ENCODE measurements at regions of chr17 and their contacts with region 1.

Region 1: GRCh38 chr17:17859909-17860765 is 23.4 kb upstream of the SREBF1 start:
- DNase-seq: peak; percentile 67 to 83 (median 78)
- H3K4me3 ChIP-seq: no peak overlapping the region
- H3K27ac ChIP-seq: no peak overlapping the region
- H3K4me1 ChIP-seq: peaks cover 2 to 12% (median 9%) of the 10 kb centered on the region in 3 donors
- H3K27me3 ChIP-seq: no peaks in the 10 kb centered on the region
- CTCF ChIP-seq: peak; percentile 98

Region 2: DNA sequence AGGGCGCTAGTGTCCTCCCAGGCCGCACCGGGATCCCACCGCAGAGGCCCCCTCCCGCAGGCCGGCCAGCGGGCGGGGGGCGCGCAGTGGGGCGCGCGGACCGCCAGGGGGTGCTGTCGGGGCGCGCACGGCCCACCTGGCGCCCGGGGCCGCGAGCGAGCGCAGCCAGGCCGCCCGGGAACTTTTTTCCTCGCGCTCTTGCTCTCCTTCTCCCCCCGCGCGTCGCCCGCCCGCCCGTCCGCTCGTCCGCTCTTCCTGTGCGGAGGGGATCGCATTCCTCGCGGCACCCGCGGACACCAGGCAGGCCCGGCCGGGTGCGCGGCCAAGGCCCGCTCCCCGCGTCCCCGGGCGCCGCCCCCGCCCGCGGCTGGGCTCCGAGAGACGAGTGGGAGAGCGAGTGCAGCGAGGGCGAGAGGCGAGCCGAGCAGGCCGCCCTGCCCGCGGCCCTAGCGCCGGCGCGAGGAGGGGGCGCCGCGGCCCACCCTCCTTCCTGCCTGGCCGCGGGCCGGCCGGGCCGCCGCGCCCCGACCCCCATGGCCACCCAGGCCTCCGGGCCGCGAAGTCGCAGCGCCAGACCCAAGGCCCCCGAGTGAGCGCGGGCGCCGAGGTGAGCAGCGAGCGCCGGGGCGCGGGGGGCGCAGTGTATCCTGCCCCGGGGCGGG is 178.8 kb before region 1 on chr17 and contains the start of gene RAI1:
- intact Hi-C with region 1: loop called (anchors 5 kb)
- DNase-seq: peak; percentile 87 to 95 (median 91)
- H3K4me3 ChIP-seq: peak within 1 kb of the TSS; percentile 20 to 71 (median 37)
- H3K27ac ChIP-seq: peak within 1 kb of the TSS; percentile 93
- H3K4me1 ChIP-seq: peaks cover 0 to 21% (median 18%) of the 10 kb centered on the region in 3 donors
- H3K27me3 ChIP-seq: no peaks in the 10 kb centered on the region
- CTCF ChIP-seq: peak; percentile 84
- total RNA-seq, gene RAI1: 50.5 TPM

Region 3: GRCh38 chr17:17712268-17712924 is 147.7 kb before region 1 on chr17:
- intact Hi-C with region 1: no loop called
- DNase-seq: no peak
- H3K4me3 ChIP-seq: no peak overlapping the region
- H3K27ac ChIP-seq: peak overlapping the region; percentile 81 to 88
- H3K4me1 ChIP-seq: peaks cover 0 to 31% (median 17%) of the 10 kb centered on the region in 3 donors
- H3K27me3 ChIP-seq: no peaks in the 10 kb centered on the region
- CTCF ChIP-seq: no peak

Region 4: GRCh38 chr17:17812211-17813057 is 47.7 kb before region 1 on chr17:
- intact Hi-C with region 1: loop called (anchors 5 kb)
- DNase-seq: peak; percentile 78 to 92 (median 85)
- H3K4me3 ChIP-seq: no peak overlapping the region
- H3K27ac ChIP-seq: peak overlapping the region in 1 of 2 donors; percentile 14
- H3K4me1 ChIP-seq: peaks cover 2 to 12% (median 6%) of the 10 kb centered on the region in 3 donors
- H3K27me3 ChIP-seq: no peaks in the 10 kb centered on the region
- CTCF ChIP-seq: peak; percentile 94

Region 5: GRCh38 chr17:17950806-17951205 is 90.7 kb after region 1 on chr17:
- intact Hi-C with region 1: no loop called
- DNase-seq: no peak
- H3K4me3 ChIP-seq: no peak overlapping the region
- H3K27ac ChIP-seq: no peak overlapping the region
- H3K4me1 ChIP-seq: peaks cover 0 to 3% (median 0%) of the 10 kb centered on the region in 3 donors
- H3K27me3 ChIP-seq: no peaks in the 10 kb centered on the region
- CTCF ChIP-seq: no peak

Region 6: GRCh38 chr17:17994271-17995069 is 134.3 kb after region 1 on chr17:
- intact Hi-C with region 1: no loop called
- DNase-seq: peak; percentile 25 to 61 (median 50)
- H3K4me3 ChIP-seq: no peak overlapping the region
- H3K27ac ChIP-seq: no peak overlapping the region
- H3K4me1 ChIP-seq: no peaks in the 10 kb centered on the region
- H3K27me3 ChIP-seq: no peaks in the 10 kb centered on the region
- CTCF ChIP-seq: no peak